Activated CD4-positive, alpha-beta T cell treated with anti-CD3 and anti-CD28 coated beads for 36 hours (primary cell): ENCODE measurements at regions of chr5 and their contacts with region 1.

Region 1: GRCh38 chr5:56523790-56524575 is 290.9 kb upstream of the ANKRD55 start:
- DNase-seq: no peak
- ATAC-seq: no peak
- H3K4me3 Mint-ChIP-seq: no peak overlapping the region
- H3K27ac Mint-ChIP-seq: no peak overlapping the region
- H3K4me1 Mint-ChIP-seq: peaks cover 8% of the 10 kb centered on the region
- H3K27me3 Mint-ChIP-seq: no peaks in the 10 kb centered on the region

Region 2: DNA sequence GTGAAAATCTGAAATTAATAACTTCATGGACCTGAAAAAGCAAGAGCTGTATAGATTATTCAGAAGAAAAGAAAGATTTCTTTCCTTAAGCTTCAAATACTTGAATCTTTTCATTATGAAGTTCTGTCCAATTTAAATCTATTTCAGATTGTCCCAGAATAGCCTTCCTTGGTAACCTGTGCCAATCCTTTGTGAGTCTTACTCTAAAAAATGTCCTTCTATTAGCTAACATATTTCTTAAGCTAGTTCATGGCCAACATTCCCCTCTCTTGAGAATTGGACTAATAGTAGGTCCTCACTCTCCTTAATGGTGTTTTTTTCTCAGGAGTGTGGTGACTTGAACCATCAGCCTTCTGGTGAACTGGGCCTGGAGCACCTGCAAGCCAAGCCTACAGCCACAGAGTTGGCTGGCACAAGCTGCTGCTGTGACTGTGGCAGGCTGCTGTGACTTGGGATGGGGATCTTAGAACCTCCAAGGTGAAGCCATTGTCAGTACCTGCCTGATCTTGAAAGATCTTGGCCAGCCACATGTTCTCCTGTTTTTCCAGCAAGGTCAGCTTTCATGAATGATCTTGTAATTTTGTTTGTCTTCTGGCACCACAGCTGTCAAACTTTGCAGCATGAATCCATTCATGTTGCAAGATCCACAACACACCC is 28.8 kb after region 1 on chr5:
- CTCF ChIA-PET with region 1: no interaction called
- POLR2A ChIA-PET with region 1: no interaction called
- intact Hi-C with region 1: loop called in 1 of 2 experiments (anchors 1 kb)
- DNase-seq: no peak
- ATAC-seq: no peak
- H3K4me3 Mint-ChIP-seq: no peak overlapping the region
- H3K27ac Mint-ChIP-seq: no peak overlapping the region
- H3K4me1 Mint-ChIP-seq: peaks cover 2% of the 10 kb centered on the region
- H3K27me3 Mint-ChIP-seq: no peaks in the 10 kb centered on the region